ENCODE measurements at regions of chr6 and their contacts with region 1.

Region 1: GRCh38 chr6:17584241-17584803 is 15.8 kb upstream of the FAM8A1 start:
- DNase-seq: peak; percentile 57
- CTCF ChIP-seq: peak; percentile 36

Region 2: DNA sequence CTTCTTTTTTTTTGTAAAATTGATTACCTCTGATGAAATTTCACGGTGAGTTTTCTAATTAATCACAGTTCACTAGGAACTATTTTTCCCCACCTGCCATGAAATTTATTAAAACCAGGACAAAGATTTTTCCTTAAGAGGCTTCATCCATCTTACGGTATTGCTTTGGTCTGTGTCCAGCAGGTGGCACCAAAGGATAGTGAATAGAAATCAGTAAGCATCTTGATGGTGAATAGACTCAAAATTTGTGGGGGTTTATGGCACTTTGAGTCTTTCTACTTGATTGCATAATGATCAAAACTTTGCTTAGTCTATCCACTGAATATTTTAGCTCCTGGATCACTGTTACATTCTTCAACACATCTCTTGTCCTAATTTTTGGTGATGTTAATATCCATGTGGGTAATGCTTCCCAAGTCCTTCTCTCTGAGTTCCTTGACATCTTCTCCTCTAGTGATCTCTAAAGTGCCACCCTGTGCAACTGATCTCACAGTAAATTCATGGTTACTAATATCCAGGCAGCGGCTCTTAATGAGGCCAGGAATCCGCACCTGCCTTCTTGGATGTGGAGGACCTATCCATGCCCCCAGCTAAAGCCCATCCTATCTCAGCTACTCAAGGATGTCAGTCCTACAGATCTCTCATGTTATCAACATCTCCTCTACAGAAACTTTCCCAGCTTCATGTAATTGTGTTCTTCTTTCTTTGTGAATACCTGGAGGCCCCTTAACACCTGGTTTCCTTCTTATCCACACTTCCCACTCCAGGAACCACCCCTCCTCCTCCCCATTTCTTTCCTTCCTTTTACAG is 428.0 kb before region 1 on chr6:
- in situ Hi-C with region 1: loop called (anchors 10 kb)
- DNase-seq: peak; percentile 58
- CTCF ChIP-seq: peak; percentile 60

Region 3: GRCh38 chr6:17808609-17809008 is 224.3 kb after region 1 on chr6:
- in situ Hi-C with region 1: loop called (anchors 5 kb)
- DNase-seq: no peak
- CTCF ChIP-seq: no peak

Region 4: GRCh38 chr6:18277237-18278006 is 693.1 kb after region 1 on chr6:
- in situ Hi-C with region 1: no loop called
- DNase-seq: no peak
- CTCF ChIP-seq: no peak